AG04450 (cell line): ENCODE measurements at regions of chrX and their contacts with region 1.

Region 1: GRCh38 chrX:154409222-154409871 is at the start of gene DNASE1L1:
- DNase-seq: peak; percentile 57
- H3K4me3 ChIP-seq: peak within 1 kb of the TSS; percentile 62
- H3K27ac ChIP-seq: peak within 1 kb of the TSS; percentile 68
- H3K27me3 ChIP-seq: no peaks in the 10 kb centered on the region
- CTCF ChIP-seq: no peak
- polyA plus RNA-seq, gene DNASE1L1: 25.7 and 36.6 TPM in 2 replicates

Region 2: GRCh38 chrX:153828723-153829548 is 580.4 kb before region 1 on chrX:
- CTCF ChIA-PET with region 1: no interaction called
- POLR2A ChIA-PET with region 1: no interaction called
- DNase-seq: no peak
- H3K4me3 ChIP-seq: no peak overlapping the region
- H3K27ac ChIP-seq: no peak overlapping the region
- H3K27me3 ChIP-seq: peaks cover 41% of the 10 kb centered on the region
- CTCF ChIP-seq: no peak

Region 3: DNA sequence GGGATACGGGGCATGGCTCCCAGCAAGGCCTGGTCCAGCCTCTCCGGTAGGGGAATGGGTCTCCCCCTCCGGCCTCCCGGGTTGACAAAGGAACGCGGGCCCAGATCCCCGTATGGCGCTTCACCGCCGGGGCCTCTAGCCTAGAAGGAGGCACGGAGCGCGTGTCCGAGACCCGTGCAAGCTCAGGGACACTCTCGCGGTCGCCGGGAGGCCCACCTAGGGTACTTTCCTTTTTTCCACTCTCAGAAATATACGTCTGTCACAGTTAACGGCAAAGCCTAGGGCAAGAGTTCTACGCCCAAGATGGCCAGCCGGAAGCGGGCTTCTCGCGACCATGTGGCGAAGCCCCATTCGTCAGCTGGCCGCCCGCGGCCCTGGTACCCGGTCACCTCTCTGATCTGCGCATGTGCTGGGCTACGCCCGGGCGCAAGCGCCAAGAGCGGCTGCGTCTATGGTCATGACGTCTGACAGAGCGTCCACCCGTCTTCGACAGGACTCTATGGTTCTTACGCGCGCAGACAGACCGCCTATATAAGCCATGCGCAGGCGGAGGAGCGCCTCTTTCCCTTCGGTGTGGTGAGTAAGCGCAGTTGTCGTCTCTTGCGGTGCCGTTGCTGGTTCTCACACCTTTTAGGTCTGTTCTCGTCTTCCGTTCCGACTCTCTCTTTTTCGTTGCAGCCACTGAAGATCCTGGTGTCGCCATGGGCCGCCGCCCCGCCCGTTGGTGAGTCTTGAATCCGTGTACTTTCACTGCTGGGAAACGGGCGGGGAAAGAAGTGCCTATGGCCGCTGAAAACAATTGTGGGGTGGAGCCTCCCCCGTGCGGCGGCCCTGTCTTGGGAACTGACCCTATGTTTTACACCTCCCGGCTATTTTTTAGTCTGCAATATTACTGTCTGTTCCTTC is 11.3 kb before region 1 on chrX and contains the start of gene RPL10:
- CTCF ChIA-PET with region 1: interaction called, 7 read pairs
- POLR2A ChIA-PET with region 1: interaction called, 12 read pairs
- DNase-seq: peak; percentile 94
- H3K4me3 ChIP-seq: peak within 1 kb of the TSS; percentile 84
- H3K27ac ChIP-seq: peak within 1 kb of the TSS; percentile 98
- H3K27me3 ChIP-seq: no peaks in the 10 kb centered on the region
- CTCF ChIP-seq: no peak
- polyA plus RNA-seq, gene RPL10: 3,912 and 4,828 TPM in 2 replicates

Region 4: GRCh38 chrX:154452823-154453222 is 43.5 kb after region 1 on chrX:
- CTCF ChIA-PET with region 1: no interaction called
- POLR2A ChIA-PET with region 1: no interaction called
- DNase-seq: no peak
- H3K4me3 ChIP-seq: no peak overlapping the region
- H3K27ac ChIP-seq: no peak overlapping the region
- H3K27me3 ChIP-seq: no peaks in the 10 kb centered on the region
- CTCF ChIP-seq: no peak

Region 5: DNA sequence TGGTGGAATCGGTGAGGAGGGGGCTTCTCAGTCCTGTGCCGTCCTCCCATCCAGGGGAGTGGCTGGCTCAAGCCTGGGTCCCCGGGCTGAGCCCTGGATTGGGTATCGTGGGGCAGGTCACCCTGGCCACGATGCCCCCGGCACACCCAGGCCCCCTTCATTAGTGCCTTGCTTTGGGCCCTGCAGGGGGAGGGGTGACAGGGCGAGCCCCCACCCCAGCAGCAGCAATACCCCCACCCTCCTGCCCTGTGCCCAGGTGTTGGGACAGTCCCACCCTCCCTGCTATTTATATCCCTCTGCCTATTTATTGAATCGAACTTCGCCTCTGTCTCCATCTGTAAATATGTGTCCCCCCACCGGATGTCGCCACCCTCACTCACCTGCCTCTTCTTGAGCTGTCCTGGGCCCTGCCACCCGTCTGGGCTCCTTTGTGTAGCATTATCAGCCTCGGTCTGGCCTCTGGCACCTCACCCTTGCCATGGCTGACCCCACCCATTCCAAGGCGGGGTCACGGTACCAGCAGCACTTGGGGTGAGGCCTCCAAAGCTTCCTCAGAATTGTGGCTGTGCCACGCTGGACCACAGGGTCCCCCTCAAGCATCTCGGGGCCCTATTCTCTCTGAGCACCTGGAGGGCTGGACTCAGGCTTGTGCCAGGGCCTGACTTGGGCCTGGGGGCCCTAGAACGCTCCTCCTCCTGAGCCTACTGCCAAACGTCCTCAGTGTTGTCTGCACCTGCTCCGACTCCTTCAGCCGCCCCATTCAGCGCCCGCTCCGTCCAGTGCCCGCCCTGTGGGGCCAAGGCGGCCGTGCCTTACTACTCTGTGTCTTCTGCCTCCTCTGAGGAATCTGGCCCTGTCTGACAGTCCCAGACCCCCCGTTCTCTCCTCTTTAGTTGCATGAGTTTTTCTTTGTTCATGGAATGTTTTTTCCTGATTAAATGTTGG is 63.6 kb after region 1 on chrX:
- CTCF ChIA-PET with region 1: no interaction called
- POLR2A ChIA-PET with region 1: no interaction called
- DNase-seq: no peak
- H3K4me3 ChIP-seq: no peak overlapping the region
- H3K27ac ChIP-seq: no peak overlapping the region
- H3K27me3 ChIP-seq: no peaks in the 10 kb centered on the region
- CTCF ChIP-seq: no peak